CD4-positive, alpha-beta memory T cell (primary cell): ENCODE measurements at regions of chr17 and their contacts with region 1.

Region 1: GRCh38 chr17:19977311-19978208 is at the start of gene AKAP10:
- DNase-seq: peak; percentile 86 to 91 (median 88)
- H3K4me3 ChIP-seq: peak within 1 kb of the TSS; percentile 71 to 87
- H3K4me3 Mint-ChIP-seq: peak within 1 kb of the TSS; percentile 94 to 99 (median 96)
- H3K27ac ChIP-seq: peak within 1 kb of the TSS; percentile 93
- H3K27ac Mint-ChIP-seq: peak within 1 kb of the TSS; percentile 95 to 98 (median 97)
- H3K4me1 ChIP-seq: peaks cover 49% of the 10 kb centered on the region
- H3K4me1 Mint-ChIP-seq: peaks cover 29 to 55% (median 44%) of the 10 kb centered on the region in 4 donors
- H3K27me3 ChIP-seq: no peaks in the 10 kb centered on the region
- H3K27me3 Mint-ChIP-seq: no peaks in the 10 kb centered on the region
- total RNA-seq, gene AKAP10: 58.3 to 72.1 TPM

Region 2: DNA sequence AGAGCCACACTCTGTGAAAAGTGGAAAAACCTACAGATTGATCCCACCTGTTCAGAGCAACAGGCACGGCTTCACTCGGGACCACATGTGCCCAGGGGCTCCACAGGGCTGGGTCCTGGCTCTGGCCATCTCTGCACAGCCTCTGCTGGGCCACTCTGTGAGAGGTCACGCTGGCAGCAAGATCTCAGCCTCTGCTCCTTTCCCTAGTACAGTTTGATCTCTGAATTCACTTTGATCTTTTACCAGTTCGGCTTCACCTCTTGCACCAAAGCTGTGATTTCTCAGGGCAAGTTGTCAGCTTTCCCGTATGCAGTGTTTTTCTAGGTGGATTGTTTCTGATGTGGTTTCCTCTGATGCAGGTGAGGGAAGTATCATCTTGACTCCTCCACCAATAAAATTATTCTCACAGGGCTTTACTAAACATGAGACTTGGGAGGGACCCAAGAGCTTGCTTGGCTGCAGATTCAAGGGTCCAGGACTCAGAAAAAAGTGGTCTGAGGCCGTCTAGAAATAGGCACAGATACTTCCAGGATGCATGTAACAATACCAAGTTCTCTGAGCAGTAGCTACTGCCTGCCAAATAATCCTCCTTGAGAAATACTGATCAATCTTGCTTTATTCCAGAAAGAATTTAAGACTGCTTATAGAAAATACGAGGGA is 205.5 kb before region 1 on chr17:
- CTCF ChIA-PET with region 1: no interaction called
- POLR2A ChIA-PET with region 1: interaction called, 11 read pairs
- intact Hi-C with region 1: no loop called
- DNase-seq: peak; percentile 79 to 89 (median 85)
- H3K4me3 ChIP-seq: peak overlapping the region in 1 of 2 donors; percentile 16
- H3K4me3 Mint-ChIP-seq: peak overlapping the region; percentile 65 to 86 (median 79)
- H3K27ac ChIP-seq: peak overlapping the region; percentile 24
- H3K27ac Mint-ChIP-seq: peak overlapping the region; percentile 86 to 98 (median 95)
- H3K4me1 ChIP-seq: peaks cover 66% of the 10 kb centered on the region
- H3K4me1 Mint-ChIP-seq: peaks cover 37 to 70% (median 61%) of the 10 kb centered on the region in 4 donors
- H3K27me3 ChIP-seq: no peaks in the 10 kb centered on the region
- H3K27me3 Mint-ChIP-seq: no peaks in the 10 kb centered on the region

Region 3: DNA sequence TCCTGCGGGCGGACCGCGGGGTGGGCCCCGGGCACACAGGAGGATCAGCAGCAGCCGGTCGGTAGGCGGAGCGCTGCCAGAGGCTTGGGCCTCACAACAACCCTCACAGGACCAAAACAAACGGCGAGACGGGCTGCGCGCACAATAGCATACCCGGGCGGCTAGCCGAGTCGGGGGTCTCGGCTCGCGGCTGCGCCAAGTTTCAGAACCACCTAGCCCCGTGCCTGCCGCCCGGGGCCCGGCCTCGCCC is 110.6 kb before region 1 on chr17:
- CTCF ChIA-PET with region 1: no interaction called
- POLR2A ChIA-PET with region 1: interaction called, 11 read pairs
- intact Hi-C with region 1: no loop called
- DNase-seq: peak; percentile 47 to 60 (median 57)
- H3K4me3 ChIP-seq: peak overlapping the region; percentile 23 to 70
- H3K4me3 Mint-ChIP-seq: peak overlapping the region; percentile 75 to 88 (median 84)
- H3K27ac ChIP-seq: peak overlapping the region; percentile 54
- H3K27ac Mint-ChIP-seq: peak overlapping the region in 6 of 7 donors; percentile 24 to 87 (median 67)
- H3K4me1 ChIP-seq: peaks cover 14% of the 10 kb centered on the region
- H3K4me1 Mint-ChIP-seq: peaks cover 4 to 21% (median 12%) of the 10 kb centered on the region in 4 donors
- H3K27me3 ChIP-seq: no peaks in the 10 kb centered on the region
- H3K27me3 Mint-ChIP-seq: no peaks in the 10 kb centered on the region

Region 4: GRCh38 chr17:19876529-19877161 is 100.9 kb before region 1 on chr17:
- CTCF ChIA-PET with region 1: no interaction called
- POLR2A ChIA-PET with region 1: interaction called, 15 read pairs
- intact Hi-C with region 1: no loop called
- DNase-seq: peak; percentile 57 to 72 (median 64)
- H3K4me3 ChIP-seq: peak overlapping the region; percentile 0 to 16
- H3K4me3 Mint-ChIP-seq: peak overlapping the region; percentile 73 to 94 (median 78)
- H3K27ac ChIP-seq: peak overlapping the region; percentile 19
- H3K27ac Mint-ChIP-seq: peak overlapping the region; percentile 64 to 96 (median 90)
- H3K4me1 ChIP-seq: peaks cover 32% of the 10 kb centered on the region
- H3K4me1 Mint-ChIP-seq: peaks cover 29 to 57% (median 36%) of the 10 kb centered on the region in 4 donors
- H3K27me3 ChIP-seq: no peaks in the 10 kb centered on the region
- H3K27me3 Mint-ChIP-seq: no peaks in the 10 kb centered on the region

Region 5: GRCh38 chr17:20009302-20010098 is 31.9 kb after region 1 on chr17 and contains the start of gene SPECC1:
- CTCF ChIA-PET with region 1: interaction called, 4 read pairs
- POLR2A ChIA-PET with region 1: interaction called, 22 read pairs
- intact Hi-C with region 1: loop called (anchors 1 kb)
- DNase-seq: peak; percentile 78 to 91 (median 85)
- H3K4me3 ChIP-seq: peak within 1 kb of the TSS; percentile 65 to 66
- H3K4me3 Mint-ChIP-seq: peak within 1 kb of the TSS; percentile 91 to 98 (median 93)
- H3K27ac ChIP-seq: peak within 1 kb of the TSS; percentile 33
- H3K27ac Mint-ChIP-seq: peak within 1 kb of the TSS; percentile 29 to 92 (median 84)
- H3K4me1 ChIP-seq: peaks cover 14% of the 10 kb centered on the region
- H3K4me1 Mint-ChIP-seq: peaks cover 9 to 17% (median 10%) of the 10 kb centered on the region in 4 donors
- H3K27me3 ChIP-seq: peaks cover 7% of the 10 kb centered on the region
- H3K27me3 Mint-ChIP-seq: peaks cover 19 to 24% of the 10 kb centered on the region in 2 donors
- total RNA-seq, gene SPECC1: 12.8 to 13.4 TPM

Region 6: DNA sequence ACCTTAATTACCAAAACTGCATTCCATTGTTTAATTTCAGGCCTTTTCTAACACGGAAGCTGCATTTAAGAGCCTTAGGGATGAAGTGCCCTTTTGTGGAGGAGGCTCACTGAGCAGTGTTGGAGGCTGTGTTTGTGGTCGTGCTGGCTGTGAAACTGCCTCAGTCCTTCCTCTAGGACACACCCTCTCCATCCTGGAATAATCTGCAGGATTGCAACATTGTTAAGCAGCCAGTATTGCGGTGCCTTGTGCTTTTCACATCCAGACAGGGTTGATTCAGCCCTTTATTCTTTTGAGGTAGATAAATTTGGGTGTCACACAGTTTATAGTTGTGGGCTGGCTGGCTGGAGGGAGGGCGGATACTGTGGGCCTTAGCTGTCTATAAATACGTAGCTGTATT is 743.6 kb after region 1 on chr17:
- CTCF ChIA-PET with region 1: no interaction called
- POLR2A ChIA-PET with region 1: no interaction called
- intact Hi-C with region 1: no loop called
- DNase-seq: no peak
- H3K4me3 ChIP-seq: no peak overlapping the region
- H3K4me3 Mint-ChIP-seq: no peak overlapping the region
- H3K27ac ChIP-seq: no peak overlapping the region
- H3K27ac Mint-ChIP-seq: no peak overlapping the region
- H3K4me1 ChIP-seq: no peaks in the 10 kb centered on the region
- H3K4me1 Mint-ChIP-seq: no peaks in the 10 kb centered on the region
- H3K27me3 ChIP-seq: no peaks in the 10 kb centered on the region
- H3K27me3 Mint-ChIP-seq: peaks cover 5 to 6% of the 10 kb centered on the region in 2 donors